HEK293T (cell line): ENCODE measurements at regions of chr5 and their contacts with region 1.

Region 1: DNA sequence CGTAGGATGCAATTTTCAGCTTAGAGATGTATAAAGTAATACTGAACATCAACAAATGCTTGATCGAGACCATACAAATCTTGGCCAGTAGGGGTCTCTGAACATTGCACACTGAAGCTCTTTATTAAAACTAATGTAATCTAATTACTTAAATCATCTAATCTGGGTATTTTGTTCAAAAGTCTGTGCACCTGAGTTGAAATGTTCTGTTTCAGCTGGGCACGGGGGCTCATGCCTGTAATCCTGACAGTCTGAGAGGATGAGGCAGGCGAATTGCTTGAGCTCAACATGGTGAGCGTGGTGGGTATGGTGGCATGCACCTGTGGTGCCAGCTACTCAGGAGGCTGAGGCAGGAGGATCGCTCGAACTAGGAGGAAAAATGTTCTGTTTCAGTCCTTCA is 41.0 kb downstream of the ESM1 start:
- DNase-seq: peak; percentile 24

Region 2: DNA sequence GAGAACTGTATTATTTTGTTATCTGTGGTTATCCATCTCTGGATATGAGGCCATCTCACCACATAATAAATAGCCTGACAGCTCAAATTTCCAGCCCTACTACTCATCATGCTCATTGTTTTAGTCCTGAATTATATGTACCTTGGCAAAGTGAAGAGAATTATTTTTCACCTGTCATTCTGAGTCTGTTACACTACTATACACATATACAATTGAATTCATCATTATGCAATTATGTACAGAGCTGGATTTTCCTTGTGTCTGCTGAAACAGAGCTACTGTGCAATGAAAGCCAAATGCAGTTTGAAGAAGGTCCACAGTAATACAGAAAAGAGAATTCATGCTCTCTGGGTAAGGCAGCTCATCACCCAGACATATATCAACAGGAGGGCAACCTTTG is 12.6 kb after region 1 on chr5:
- CTCF ChIA-PET with region 1: interaction called, 14 read pairs
- POLR2A ChIA-PET with region 1: no interaction called
- DNase-seq: no peak

Region 3: DNA sequence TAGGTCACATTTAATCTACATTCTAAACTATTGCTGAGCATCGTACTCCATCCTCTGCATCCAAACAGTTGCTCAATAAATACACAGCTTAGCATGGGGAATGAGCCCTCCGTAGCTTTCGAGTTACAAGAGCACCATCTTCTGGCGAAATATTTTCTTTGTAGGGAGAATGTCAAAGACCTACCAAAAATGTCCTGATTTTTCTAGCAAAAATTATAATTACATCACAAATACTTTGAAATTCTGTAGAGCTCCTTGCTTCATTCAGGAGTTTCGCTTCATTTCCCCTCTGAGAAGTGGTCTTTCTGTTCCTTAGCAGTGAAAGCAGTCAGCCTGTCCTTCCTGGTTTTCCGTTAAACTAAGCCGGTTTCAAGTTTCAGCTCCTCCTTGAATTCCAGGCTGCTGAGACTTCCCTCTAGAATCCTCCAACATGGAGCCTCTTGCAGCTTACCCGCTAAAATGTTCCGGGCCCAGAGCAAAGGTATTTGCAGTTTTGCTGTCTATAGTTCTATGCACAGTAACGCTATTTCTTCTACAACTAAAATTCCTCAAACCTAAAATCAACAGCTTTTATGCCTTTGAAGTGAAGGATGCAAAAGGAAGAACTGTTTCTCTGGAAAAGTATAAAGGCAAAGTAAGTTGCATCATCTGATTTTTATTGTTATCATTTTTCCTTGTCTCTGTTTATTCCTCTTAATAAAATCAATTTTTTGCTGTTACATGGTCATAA is 215.6 kb after region 1 on chr5 and contains the start of gene GPX8:
- CTCF ChIA-PET with region 1: interaction called, 10 read pairs
- POLR2A ChIA-PET with region 1: interaction called, 9 read pairs
- DNase-seq: peak; percentile 72